K562 (cell line): ENCODE measurements at regions of chr6 and their contacts with region 1.

Region 1: GRCh38 chr6:33851959-33852358 is 48.2 kb upstream of the MLN start:
- DNase-seq: peak; percentile 62 to 75 (median 70)
- ATAC-seq: peak; percentile 86
- H3K4me3 ChIP-seq: no peak overlapping the region
- H3K27ac ChIP-seq: no peak overlapping the region
- H3K4me1 ChIP-seq: peaks cover 4 to 22% of the 10 kb centered on the region in 2 experiments; a peak in 3 of 5 replicates
- H3K27me3 ChIP-seq: peaks cover 12 to 28% of the 10 kb centered on the region in 2 experiments; a peak in 2 of 5 replicates
- CTCF ChIP-seq: peak; percentile 78 to 87 (median 84)
- EP300 ChIP-seq: no peak
- POLR2A ChIP-seq: no peak
- RAD21 ChIP-seq: peak; percentile 33 to 73

Region 2: DNA sequence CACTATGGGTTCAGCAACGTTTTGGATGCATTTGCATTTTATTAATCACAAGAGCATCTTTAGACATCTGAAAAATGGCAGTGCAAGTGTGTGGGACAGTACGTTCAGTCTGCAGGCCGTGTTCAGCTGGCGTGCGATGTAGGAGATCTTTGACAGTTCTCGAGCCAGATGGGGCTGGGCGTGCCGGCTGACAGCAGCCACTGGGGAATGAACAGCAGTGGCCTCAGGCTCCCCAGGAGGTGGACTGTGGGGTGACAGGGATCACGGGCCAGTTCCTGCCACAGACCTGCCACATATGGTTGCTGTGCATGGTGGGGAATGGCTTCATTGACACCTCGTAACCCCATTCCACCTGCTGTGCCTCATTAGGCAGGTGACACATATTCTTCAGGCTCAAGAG is 31.7 kb before region 1 on chr6:
- CTCF ChIA-PET with region 1: no interaction called
- POLR2A ChIA-PET with region 1: no interaction called
- in situ Hi-C with region 1: no loop called
- intact Hi-C with region 1: no loop called
- DNase-seq: peak in 2 of 4 experiments; percentile 31 to 34
- ATAC-seq: 0 out of 3 replicates have a peak, but pooled peaks have one; percentile 8
- H3K4me3 ChIP-seq: no peak overlapping the region
- H3K27ac ChIP-seq: no peak overlapping the region
- H3K4me1 ChIP-seq: peaks cover 0 to 9% of the 10 kb centered on the region in 2 experiments; a peak in 2 of 5 replicates
- H3K27me3 ChIP-seq: peaks cover 18 to 77% of the 10 kb centered on the region in 2 experiments
- CTCF ChIP-seq: no peak
- EP300 ChIP-seq: no peak
- POLR2A ChIP-seq: no peak
- RAD21 ChIP-seq: no peak

Region 3: DNA sequence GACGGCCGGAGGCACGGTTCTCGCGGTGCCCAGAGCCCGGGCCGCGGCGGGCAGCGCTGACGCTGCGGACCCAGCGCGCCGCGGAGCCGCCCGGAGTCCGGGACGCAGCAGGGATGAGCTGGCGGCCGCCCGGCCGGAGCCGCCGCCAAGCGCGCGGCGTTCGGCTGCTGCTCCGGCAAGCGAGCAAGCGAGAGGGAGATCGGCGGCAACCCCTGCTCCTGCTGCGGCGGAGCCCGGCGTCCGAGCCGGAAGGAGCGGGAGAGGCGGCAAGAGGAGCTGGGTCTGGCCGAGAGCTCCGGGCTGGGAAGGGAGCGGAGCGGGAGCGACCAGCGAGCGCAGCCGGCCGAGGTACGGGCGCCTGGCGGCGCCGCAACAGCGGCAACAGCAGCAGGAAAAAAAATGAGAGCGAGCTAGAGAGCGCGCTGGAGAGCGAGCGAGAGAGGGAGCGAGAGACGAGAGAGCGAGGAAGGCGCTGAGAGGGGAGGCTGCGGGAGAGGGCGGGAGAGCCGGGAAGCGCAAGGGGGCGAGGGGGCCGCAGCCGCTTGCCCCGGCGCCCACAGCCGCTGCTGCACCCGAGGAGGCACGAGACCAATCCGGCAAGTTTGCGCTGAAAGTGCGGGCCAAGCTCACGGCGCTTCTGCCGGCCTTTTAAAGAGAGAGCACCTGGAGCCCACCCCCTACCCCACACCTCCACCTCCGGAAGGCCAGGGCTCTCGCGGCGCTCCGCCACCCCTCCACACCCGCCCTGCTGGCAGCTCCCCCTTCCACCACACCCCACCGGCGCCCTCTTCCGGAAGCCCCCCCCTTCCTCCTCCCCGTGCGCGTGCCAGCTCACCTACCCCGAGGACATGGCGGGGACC is 293.4 kb after region 1 on chr6:
- CTCF ChIA-PET with region 1: no interaction called
- POLR2A ChIA-PET with region 1: no interaction called
- in situ Hi-C with region 1: no loop called
- intact Hi-C with region 1: loop called (anchors 10 kb)
- DNase-seq: peak in 3 of 4 experiments; percentile 21 to 51 (median 48)
- ATAC-seq: no peak
- H3K4me3 ChIP-seq: no peak overlapping the region
- H3K27ac ChIP-seq: no peak overlapping the region
- H3K4me1 ChIP-seq: peaks cover 0 to 41% of the 10 kb centered on the region in 2 experiments; a peak in 2 of 5 replicates
- H3K27me3 ChIP-seq: peaks cover 18 to 75% of the 10 kb centered on the region in 2 experiments; a peak in 4 of 5 replicates
- CTCF ChIP-seq: no peak
- EP300 ChIP-seq: no peak
- POLR2A ChIP-seq: no peak
- RAD21 ChIP-seq: no peak